CD8-positive, alpha-beta T cell (primary cell): ENCODE measurements at regions of chrX and their contacts with region 1.

Region 1: DNA sequence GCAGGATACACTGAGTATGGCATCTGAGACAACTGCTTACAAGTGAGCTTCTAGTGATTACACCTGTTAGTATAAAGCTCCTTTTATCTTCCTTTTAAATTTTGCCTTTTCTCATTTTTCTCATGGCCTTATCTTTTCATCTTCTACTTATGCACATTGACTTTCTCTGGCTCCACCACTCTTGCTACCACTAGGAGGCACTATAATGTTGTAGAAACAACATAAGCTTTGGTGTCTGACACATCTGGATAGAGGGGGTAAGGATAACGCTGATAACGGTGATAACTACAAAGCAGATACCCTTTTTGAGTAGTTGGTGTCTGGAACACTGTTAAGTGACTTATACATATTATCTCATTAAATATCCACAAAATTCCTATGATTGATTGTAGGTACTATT is 187.4 kb upstream of the TEX13C start:
- DNase-seq: peak in 2 of 9 experiments; percentile 2 to 15
- ATAC-seq: no peak
- H3K4me3 ChIP-seq: no peak overlapping the region
- H3K4me3 Mint-ChIP-seq: no peak overlapping the region
- H3K27ac ChIP-seq: no peak overlapping the region
- H3K27ac Mint-ChIP-seq: no peak overlapping the region
- H3K4me1 ChIP-seq: no peaks in the 10 kb centered on the region
- H3K4me1 Mint-ChIP-seq: no peaks in the 10 kb centered on the region
- H3K27me3 ChIP-seq: no peaks in the 10 kb centered on the region
- H3K27me3 Mint-ChIP-seq: no peaks in the 10 kb centered on the region
- CTCF ChIP-seq: peak; percentile 28

Region 2: DNA sequence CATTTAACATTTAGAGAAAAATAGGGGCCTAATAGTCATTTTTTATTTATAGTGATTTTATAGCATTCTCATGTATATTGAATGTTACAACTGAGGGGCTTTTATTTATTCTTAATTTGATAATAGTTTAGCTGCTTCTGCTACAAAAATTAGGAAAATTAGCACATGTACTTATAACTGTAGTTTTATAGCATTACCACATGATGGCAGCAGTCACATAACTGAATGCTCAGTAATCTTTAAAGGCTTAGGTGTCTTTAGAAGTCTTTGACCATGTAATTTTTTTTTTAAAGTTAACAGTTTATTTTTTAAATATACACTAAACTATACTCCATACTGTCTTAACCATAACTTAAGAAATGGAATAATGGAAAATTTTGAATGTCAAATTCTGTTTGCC is 1034.2 kb before region 1 on chrX:
- CTCF ChIA-PET with region 1: no interaction called
- POLR2A ChIA-PET with region 1: no interaction called
- intact Hi-C with region 1: loop called in 1 of 2 experiments (anchors 5 kb)
- DNase-seq: peak in 2 of 9 experiments; percentile 35 to 53
- ATAC-seq: peak; percentile 46
- H3K4me3 ChIP-seq: no peak overlapping the region
- H3K4me3 Mint-ChIP-seq: no peak overlapping the region
- H3K27ac ChIP-seq: no peak overlapping the region
- H3K27ac Mint-ChIP-seq: no peak overlapping the region
- H3K4me1 ChIP-seq: no peaks in the 10 kb centered on the region
- H3K4me1 Mint-ChIP-seq: no peaks in the 10 kb centered on the region
- H3K27me3 ChIP-seq: no peaks in the 10 kb centered on the region
- H3K27me3 Mint-ChIP-seq: no peaks in the 10 kb centered on the region
- CTCF ChIP-seq: peak; percentile 60

Region 3: GRCh38 chrX:124406294-124407014 is 725.8 kb before region 1 on chrX:
- CTCF ChIA-PET with region 1: interaction called, 5 read pairs
- POLR2A ChIA-PET with region 1: no interaction called
- intact Hi-C with region 1: loop called (anchors 2 to 10 kb)
- DNase-seq: peak; percentile 2 to 69 (median 54)
- ATAC-seq: peak; percentile 58
- H3K4me3 ChIP-seq: no peak overlapping the region
- H3K4me3 Mint-ChIP-seq: no peak overlapping the region
- H3K27ac ChIP-seq: no peak overlapping the region
- H3K27ac Mint-ChIP-seq: no peak overlapping the region
- H3K4me1 ChIP-seq: no peaks in the 10 kb centered on the region
- H3K4me1 Mint-ChIP-seq: peaks cover 9% of the 10 kb centered on the region
- H3K27me3 ChIP-seq: no peaks in the 10 kb centered on the region
- H3K27me3 Mint-ChIP-seq: no peaks in the 10 kb centered on the region
- CTCF ChIP-seq: no peak